Activated CD4-positive, alpha-beta T cell treated with anti-CD3 and anti-CD28 coated beads for 36 hours (primary cell): ENCODE measurements at regions of chr19 and their contacts with region 1.

Region 1: DNA sequence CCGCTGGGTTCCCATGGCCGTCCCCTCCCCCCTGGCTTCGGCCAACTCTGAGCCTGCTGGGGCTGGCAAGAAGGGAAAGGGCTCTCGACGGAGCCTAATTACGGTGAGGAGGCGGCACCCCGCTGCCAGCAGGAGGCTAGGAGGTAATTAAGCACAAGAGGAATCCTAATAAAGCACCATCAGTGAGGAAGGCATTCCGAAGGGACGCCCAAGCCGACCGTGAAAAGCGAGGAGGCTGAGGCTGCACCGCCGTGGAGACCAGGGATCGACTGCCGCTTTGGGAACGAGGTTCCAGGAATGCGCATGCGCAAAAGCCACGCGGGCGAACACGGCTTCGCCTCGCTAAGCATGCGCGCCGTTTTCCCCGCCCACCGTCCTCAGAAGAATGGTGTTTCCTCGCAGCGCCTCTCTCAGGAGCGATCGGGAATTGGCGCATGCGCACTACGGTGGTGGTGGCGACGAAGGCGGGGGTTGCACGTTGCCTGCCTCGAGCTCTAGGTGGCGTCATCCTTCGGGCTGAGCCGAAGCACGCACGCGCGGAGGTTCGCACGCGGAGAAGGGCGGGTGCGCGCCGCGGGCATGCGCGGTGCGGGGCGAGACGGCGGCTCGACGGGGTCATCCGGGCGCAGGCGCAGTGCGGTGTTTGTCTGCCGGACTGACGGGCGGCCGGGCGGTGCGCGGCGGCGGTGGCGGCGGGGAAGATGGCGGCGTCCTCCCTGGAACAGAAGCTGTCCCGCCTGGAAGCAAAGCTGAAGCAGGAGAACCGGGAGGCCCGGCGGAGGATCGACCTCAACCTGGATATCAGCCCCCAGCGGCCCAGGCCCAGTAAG is at the start of gene MAP2K7:
- DNase-seq: peak; percentile 100
- ATAC-seq: peak; percentile 91
- H3K4me3 Mint-ChIP-seq: peak within 1 kb of the TSS; percentile 85
- H3K27ac Mint-ChIP-seq: peak within 1 kb of the TSS; percentile 92
- H3K4me1 Mint-ChIP-seq: peaks cover 22% of the 10 kb centered on the region
- H3K27me3 Mint-ChIP-seq: no peaks in the 10 kb centered on the region
- total RNA-seq, gene MAP2K7: 32.2 to 33.7 TPM

Region 2: GRCh38 chr19:7629347-7630054 is 274.0 kb before region 1 on chr19 and contains the starts of genes PET100 and XAB2:
- CTCF ChIA-PET with region 1: no interaction called
- POLR2A ChIA-PET with region 1: interaction called, 4 read pairs
- intact Hi-C with region 1: loop called in 1 of 2 experiments (anchors 1 kb)
- DNase-seq: peak; percentile 97
- ATAC-seq: peak; percentile 99
- H3K4me3 Mint-ChIP-seq: peak within 1 kb of the TSS; percentile 88
- H3K27ac Mint-ChIP-seq: peak within 1 kb of the TSS; percentile 97
- H3K4me1 Mint-ChIP-seq: peaks cover 32% of the 10 kb centered on the region
- H3K27me3 Mint-ChIP-seq: no peaks in the 10 kb centered on the region
- total RNA-seq, gene PET100: 45.1 to 99.4 TPM
- total RNA-seq, gene XAB2: 45.9 to 48.3 TPM

Region 3: DNA sequence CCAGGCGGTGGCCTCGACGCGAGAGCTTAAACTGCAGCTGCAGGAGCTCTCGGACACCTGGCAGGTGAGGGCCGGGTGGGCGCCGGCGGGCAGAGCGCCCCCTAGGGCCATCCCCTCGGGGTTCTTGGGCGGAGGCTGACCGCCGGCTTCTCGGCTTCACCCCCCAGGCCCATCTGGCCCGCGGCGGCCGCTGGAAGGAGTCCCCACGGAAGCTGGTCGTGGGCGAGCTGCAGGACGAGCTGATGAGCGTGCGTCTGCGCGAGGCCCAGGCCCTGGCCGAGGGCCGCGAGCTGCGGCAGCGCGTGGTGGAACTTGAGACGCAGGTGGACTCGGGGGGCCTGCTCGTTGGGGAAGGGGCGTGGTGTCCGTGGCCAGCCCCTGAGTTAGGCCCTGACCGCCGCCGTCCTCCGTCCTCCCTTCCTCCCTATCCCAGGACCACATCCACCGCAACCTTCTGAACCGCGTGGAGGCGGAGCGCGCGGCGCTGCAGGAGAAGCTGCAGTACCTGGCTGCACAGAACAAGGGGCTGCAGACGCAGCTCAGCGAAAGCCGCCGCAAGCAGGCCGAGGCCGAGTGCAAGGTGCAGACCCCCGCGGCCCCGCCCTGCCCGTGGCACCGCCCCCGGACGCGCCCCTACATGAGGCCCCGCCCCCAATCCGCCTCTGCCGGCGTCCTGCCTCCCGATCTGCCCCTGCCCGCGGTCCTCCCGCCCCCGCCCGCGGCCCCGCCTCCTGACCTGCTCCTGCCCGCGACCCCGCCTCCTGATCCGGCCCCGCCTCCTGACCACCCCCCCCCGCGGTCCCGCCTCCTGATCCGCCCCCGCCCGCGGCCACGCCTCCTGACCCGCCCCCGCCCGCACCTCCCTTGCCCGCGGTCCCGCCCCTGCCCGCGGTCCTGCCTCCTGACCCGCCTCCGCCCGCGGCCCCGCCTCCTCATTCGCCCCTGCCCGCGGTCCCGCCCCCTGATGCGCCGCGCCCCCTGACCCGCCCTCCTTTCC is 41.2 kb before region 1 on chr19:
- CTCF ChIA-PET with region 1: interaction called, 4 read pairs
- POLR2A ChIA-PET with region 1: no interaction called
- intact Hi-C with region 1: loop called in 1 of 2 experiments (anchors 1 kb)
- DNase-seq: peak; percentile 95
- ATAC-seq: peak; percentile 74
- H3K4me3 Mint-ChIP-seq: peak overlapping the region; percentile 40
- H3K27ac Mint-ChIP-seq: no peak overlapping the region
- H3K4me1 Mint-ChIP-seq: peaks cover 12% of the 10 kb centered on the region
- H3K27me3 Mint-ChIP-seq: peaks cover 13% of the 10 kb centered on the region

Region 4: DNA sequence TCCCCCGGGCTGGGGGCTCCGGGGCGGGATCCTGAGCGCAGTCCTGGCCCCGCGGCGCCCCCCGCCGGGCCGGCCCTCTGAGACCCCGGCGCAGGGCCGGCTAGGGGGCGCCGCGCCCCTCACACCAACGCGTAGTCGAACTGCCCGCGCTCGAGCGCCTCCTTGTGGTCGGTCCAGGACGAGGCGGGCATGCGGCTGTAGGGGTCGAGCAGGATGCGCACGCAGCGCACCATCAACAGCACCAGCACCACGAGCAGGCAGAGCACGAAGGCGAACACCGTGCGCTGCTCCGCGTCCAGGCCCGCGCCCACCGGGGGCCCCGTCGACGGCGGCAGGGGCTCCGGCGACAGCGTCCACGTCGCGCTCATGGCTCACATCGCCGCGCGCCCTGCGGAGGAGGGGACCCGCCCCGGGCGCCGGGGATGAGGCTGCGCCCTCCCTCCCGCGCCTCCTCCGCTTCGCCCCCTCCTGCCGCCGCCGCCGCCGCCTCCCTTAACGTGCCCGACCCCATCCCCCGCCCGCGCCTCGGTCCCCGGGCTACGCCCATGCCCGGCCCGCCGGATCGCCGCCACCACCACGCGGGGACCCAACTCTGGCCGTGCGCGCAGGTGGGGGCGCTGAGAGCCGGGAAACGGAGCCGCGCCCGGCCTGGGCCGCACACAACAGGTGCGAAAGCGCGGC is 21.9 kb after region 1 on chr19:
- CTCF ChIA-PET with region 1: interaction called, 6 read pairs
- POLR2A ChIA-PET with region 1: no interaction called
- intact Hi-C with region 1: loop called (anchors 1 kb)
- DNase-seq: peak; percentile 90
- ATAC-seq: peak; percentile 50
- H3K4me3 Mint-ChIP-seq: peak overlapping the region; percentile 67
- H3K27ac Mint-ChIP-seq: no peak overlapping the region
- H3K4me1 Mint-ChIP-seq: peaks cover 28% of the 10 kb centered on the region
- H3K27me3 Mint-ChIP-seq: peaks cover 1% of the 10 kb centered on the region

Region 5: GRCh38 chr19:8005534-8006256 is 102.2 kb after region 1 on chr19 and contains the start of gene ELAVL1:
- CTCF ChIA-PET with region 1: no interaction called
- POLR2A ChIA-PET with region 1: no interaction called
- intact Hi-C with region 1: loop called in 1 of 2 experiments (anchors 1 kb)
- DNase-seq: peak; percentile 95
- ATAC-seq: peak; percentile 93
- H3K4me3 Mint-ChIP-seq: peak within 1 kb of the TSS; percentile 95
- H3K27ac Mint-ChIP-seq: peak within 1 kb of the TSS; percentile 94
- H3K4me1 Mint-ChIP-seq: peaks cover 36% of the 10 kb centered on the region
- H3K27me3 Mint-ChIP-seq: no peaks in the 10 kb centered on the region
- total RNA-seq, gene ELAVL1: 149 to 184 TPM